ENCODE measurements at regions of chr3 and their contacts with region 1.

Region 1: DNA sequence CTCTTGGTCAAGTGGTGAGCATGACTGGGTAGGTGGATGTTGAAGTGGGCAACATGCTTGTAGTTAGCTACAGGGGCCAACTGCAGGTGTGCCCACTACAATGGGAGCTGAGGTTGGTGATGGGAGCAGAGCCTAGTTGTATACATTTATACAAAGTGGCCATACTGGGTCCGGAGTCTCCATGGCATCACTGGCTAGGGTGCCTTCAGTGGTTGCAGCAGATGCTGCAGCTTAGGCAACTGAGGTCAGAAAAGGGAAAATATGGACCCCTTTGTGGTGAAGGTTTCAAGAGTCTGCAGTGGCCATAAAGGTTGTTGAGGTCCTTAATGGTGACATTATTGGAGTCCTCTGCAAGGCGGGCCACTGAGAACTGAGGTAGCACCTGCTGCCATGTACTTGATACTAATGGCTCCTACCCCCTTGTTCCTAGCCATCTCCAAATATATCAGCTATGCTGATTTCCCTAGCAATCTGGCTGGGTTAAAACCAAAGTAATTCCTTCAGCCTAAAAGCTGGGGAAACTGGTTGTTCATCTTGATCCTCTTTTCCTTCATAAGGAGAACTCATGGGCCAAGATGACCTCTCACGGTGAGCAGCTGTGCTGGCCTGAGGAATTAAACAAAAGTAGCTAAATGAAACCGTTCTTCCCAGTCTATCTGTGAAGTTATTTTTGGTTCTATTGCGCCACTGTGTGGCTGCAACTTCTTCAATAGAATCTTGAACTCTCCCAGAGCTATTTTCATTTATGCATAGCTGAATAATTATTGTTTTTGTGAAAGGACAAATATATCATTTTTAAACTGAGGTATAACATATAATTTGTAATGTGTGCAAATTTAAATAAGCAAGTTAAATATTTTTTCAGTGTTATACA is 76.0 kb upstream of the PLSCR4 start:
- DNase-seq: peak; percentile 18
- H3K4me3 ChIP-seq: no peak overlapping the region
- H3K27me3 ChIP-seq: no peaks in the 10 kb centered on the region
- CTCF ChIP-seq: peak; percentile 59

Region 2: GRCh38 chr3:146065573-146066006 is 261.3 kb before region 1 on chr3:
- CTCF ChIA-PET with region 1: interaction called, 13 read pairs
- POLR2A ChIA-PET with region 1: no interaction called
- DNase-seq: peak; percentile 9
- H3K4me3 ChIP-seq: no peak overlapping the region
- H3K27me3 ChIP-seq: no peaks in the 10 kb centered on the region
- CTCF ChIP-seq: peak; percentile 55

Region 3: GRCh38 chr3:146195030-146195429 is 131.9 kb before region 1 on chr3:
- CTCF ChIA-PET with region 1: interaction called, 133 read pairs
- POLR2A ChIA-PET with region 1: interaction called, 3 read pairs
- DNase-seq: no peak
- H3K4me3 ChIP-seq: no peak overlapping the region
- H3K27me3 ChIP-seq: no peaks in the 10 kb centered on the region
- CTCF ChIP-seq: no peak

Region 4: DNA sequence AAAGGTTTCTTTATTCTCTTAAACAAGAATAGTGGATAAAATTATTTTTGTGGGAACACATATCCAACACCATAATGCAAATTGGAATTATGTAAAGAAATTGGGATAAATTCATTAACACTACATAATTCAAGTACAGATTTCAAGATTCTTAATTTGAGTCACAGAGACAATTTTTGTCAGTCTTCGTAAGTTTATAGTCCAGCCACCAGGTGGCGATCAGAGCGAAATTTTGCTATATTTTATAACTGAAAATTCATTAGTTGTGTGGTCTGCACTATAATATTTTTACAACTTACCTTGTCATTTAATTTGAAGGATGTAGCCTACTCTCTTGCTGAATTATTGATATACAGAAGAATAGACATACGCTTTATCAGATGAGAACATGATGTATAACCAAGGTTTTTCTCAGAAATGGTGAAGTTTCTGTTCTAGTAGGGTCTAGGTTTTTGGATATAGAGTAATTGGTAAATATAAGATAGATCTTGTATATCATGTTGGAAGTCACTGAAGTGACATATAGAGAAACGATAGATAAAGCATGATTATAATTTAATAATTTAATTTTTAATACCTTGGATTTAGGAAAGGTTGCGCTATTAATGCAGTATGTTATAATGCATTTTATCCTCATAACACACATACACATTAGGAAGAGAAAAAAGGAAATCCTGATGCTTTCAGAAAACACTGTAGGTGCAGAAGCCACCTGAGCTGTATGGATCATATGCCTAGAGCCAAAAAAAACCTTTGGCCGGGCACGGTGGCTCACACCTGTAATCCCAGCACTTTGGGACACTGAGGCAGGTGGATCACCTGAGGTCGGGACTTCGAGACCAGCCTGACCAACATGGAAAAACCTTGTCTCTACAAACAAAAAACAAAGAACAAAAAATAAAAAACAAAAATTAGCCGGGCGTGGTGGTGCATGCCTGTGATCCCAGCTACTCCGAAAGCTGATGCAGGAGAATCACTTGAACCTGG is 107.7 kb before region 1 on chr3:
- CTCF ChIA-PET with region 1: interaction called, 27 read pairs
- POLR2A ChIA-PET with region 1: no interaction called
- DNase-seq: no peak
- H3K4me3 ChIP-seq: no peak overlapping the region
- H3K27me3 ChIP-seq: no peaks in the 10 kb centered on the region
- CTCF ChIP-seq: peak; percentile 63

Region 5: GRCh38 chr3:146227486-146227885 is 99.4 kb before region 1 on chr3:
- CTCF ChIA-PET with region 1: interaction called, 27 read pairs
- POLR2A ChIA-PET with region 1: no interaction called
- DNase-seq: no peak
- H3K4me3 ChIP-seq: no peak overlapping the region
- H3K27me3 ChIP-seq: no peaks in the 10 kb centered on the region
- CTCF ChIP-seq: no peak

Region 6: DNA sequence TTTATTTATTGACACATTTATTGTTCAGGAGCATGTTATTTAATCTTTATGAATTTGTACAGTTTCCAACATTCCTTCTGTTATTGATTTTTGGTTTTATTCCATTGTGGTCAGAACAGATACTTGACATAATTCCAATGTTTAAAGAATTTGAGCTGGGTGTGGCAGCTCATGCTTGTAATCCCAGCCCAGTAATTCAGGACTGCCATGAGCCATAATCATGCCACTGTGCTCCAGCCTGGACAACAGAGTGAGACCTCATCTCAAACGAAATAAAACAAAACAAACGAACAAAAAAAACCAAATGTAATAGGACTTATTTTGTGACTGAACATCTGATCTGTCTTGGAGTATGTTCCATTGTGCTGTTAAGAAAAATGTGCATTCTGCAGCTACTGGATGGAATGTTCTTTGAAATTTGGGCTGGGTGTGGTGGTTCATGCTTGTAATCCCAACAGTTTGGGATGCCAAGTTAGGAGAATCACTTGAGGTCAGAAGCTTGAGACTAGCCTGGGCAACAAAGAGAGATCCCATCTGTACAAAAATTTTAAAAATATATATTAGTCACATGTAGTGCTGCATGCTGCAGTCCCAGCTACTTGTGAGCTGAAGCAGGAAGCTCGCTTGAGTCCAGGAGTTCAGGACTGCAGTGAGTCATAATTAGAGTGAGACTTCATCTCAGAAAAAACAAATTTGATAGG is 13.3 kb before region 1 on chr3:
- CTCF ChIA-PET with region 1: interaction called, 15 read pairs
- POLR2A ChIA-PET with region 1: no interaction called
- DNase-seq: peak; percentile 64
- H3K4me3 ChIP-seq: no peak overlapping the region
- H3K27me3 ChIP-seq: no peaks in the 10 kb centered on the region
- CTCF ChIP-seq: no peak

Region 7: DNA sequence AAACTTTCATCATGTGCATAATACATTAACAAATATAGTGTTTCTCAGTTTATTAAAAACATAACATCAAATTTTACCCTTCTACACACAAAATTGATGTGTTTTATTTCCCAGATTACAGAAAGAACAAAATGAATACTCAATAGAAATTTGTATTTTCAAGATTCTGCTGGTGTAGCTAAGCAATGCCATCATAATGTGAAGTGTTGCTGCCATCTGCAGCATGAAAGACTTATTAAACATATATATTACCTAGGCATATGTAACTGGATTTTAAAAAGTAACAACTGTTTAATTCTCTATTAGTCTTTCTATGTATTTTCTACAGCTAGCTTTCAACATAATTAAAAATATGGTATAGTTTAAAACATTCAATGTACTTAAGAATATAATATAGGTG is 250.8 kb after region 1 on chr3:
- CTCF ChIA-PET with region 1: interaction called, 11 read pairs
- POLR2A ChIA-PET with region 1: no interaction called
- DNase-seq: no peak
- H3K4me3 ChIP-seq: no peak overlapping the region
- H3K27me3 ChIP-seq: no peaks in the 10 kb centered on the region
- CTCF ChIP-seq: peak; percentile 26; the same call in 1 of the 2 replicates

Measured in BJ (cell line).